ENCODE measurements at regions of chr21 and their contacts with region 1.

Region 1: DNA sequence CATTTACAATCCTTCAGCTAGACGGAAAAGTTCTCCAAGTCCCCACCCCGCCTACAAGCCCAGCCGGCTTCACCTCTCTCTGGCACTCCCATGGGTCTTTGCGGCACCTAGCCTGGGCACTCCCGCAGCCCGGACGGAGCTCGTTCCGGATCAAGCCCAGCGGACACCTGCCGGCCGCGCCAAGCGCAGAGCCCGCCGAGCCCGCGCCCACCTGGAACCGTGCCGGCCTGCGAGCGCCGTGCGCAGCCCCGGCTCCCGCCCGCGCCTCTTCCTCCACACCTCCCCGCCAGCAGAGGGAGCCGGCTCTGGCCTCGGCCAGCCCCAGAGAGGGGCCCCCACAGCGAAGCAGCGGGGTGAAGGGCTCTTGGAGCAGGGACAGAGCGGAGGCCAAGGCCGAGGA is 50.0 kb upstream of the KRTAP19-8 start:
- DNase-seq: no peak
- H3K4me3 Mint-ChIP-seq: no peak overlapping the region
- H3K27ac Mint-ChIP-seq: no peak overlapping the region
- H3K4me1 Mint-ChIP-seq: no peaks in the 10 kb centered on the region
- H3K27me3 Mint-ChIP-seq: peaks cover 35% of the 10 kb centered on the region
- CTCF ChIP-seq: no peak

Region 2: DNA sequence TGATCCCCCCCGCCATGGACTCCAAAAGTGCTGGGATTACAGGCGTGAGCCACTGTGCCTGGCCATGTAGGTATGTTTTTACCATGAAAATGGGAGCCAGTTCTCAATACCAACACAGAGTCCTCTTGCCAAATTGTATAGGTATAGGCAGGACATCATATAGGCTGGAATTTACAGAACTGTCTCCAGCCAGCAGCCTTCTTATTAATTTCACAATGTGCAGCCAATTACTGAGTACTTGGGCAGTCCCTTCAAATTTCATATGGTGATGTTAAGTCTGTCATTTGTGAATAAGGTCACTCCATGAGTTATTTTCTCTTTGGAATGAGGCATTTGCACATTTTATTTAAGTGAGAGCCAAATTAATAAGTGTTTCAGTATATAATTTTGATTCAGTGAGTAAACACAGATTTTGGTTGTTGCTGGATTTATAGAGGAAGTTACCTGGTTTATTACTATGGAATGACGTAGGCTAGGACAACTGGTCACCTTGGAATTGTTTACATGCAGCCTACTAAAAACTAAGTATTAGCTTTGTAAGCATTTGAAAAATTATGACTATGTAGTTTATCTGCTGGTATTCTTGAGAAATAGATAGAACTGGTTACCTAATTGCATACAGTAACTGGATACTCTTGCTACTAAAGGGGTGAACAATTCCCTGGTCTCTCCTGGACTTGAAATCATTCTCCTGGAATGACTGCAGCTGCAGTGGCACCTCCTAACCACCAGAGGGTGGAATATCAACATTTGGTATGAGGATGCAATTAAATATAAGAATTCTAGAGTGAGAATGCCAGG is 747.7 kb before region 1 on chr21:
- CTCF ChIA-PET with region 1: interaction called, 47 read pairs
- POLR2A ChIA-PET with region 1: no interaction called
- intact Hi-C with region 1: loop called (anchors 1 kb)
- DNase-seq: peak; percentile 56
- H3K4me3 Mint-ChIP-seq: no peak overlapping the region
- H3K27ac Mint-ChIP-seq: no peak overlapping the region
- H3K4me1 Mint-ChIP-seq: peaks cover 25% of the 10 kb centered on the region
- H3K27me3 Mint-ChIP-seq: no peaks in the 10 kb centered on the region
- CTCF ChIP-seq: peak; percentile 86

Region 3: DNA sequence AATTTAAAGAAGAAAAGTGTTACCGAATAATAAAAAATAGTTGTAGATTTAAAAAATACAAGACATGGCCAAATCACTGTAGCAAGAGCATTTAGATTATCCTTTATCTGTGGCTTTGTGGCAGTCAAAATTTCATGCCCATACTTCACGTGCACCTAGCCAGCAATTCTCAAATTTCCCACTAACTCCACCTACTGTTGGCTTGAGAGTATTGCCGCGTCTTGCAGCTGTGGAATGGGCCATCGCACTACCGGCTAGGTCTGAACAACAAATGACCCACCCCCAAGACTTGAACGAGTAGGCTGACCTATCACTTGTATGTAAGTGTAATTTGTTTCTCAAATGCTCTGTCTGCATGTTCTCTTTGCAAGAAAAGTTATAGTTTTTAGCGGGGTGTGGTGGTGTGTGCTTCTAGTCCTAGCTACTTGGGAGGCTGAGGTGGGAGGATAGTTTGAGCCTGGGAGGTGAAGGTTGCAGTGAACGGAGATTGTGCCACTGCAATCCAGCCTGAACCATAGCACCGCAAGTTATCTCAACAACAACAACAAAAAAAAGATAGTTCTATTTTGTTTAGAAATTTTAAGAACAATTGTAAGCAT is 654.2 kb before region 1 on chr21:
- CTCF ChIA-PET with region 1: no interaction called
- POLR2A ChIA-PET with region 1: no interaction called
- intact Hi-C with region 1: loop called (anchors 5 kb)
- DNase-seq: peak; percentile 67
- H3K4me3 Mint-ChIP-seq: no peak overlapping the region
- H3K27ac Mint-ChIP-seq: no peak overlapping the region
- H3K4me1 Mint-ChIP-seq: peaks cover 6% of the 10 kb centered on the region
- H3K27me3 Mint-ChIP-seq: peaks cover 89% of the 10 kb centered on the region
- CTCF ChIP-seq: peak; percentile 44

Region 4: GRCh38 chr21:30502041-30502440 is 586.3 kb before region 1 on chr21 and contains the start of gene KRTAP19-5:
- CTCF ChIA-PET with region 1: no interaction called
- POLR2A ChIA-PET with region 1: no interaction called
- intact Hi-C with region 1: loop called (anchors 5 kb)
- DNase-seq: no peak
- H3K4me3 Mint-ChIP-seq: no peak within 1 kb of the TSS
- H3K27ac Mint-ChIP-seq: no peak within 1 kb of the TSS
- H3K4me1 Mint-ChIP-seq: no peaks in the 10 kb centered on the region
- H3K27me3 Mint-ChIP-seq: peaks cover 44% of the 10 kb centered on the region
- CTCF ChIP-seq: no peak
- total RNA-seq, gene KRTAP19-5: not detected in 2 replicates

Region 5: DNA sequence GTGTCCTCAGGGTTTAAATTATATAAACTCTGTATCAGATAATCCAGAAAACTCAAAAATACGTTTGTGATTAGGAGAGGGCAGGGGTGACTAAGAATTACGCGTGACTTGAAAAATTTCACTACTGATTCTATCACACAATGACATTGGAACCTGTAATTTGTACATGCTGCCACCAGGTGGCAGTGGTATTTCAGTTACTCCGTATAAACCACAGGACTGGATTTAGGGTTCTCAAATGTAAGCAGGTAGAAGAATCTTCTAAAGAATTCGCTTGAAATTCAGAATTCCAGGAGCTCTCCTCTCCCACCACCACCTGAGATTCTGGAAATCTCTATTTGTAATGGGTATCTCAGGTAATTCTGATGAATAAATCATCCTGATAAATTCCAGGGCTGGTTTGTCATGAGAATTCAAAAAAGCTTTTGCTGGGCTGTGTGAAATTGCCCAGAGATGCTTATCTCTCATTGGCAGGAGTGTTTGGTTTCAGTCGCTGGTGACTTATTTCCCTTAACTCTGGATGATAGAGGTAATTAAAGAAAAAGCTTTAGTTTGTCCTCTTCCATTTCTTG is 257.0 kb before region 1 on chr21:
- CTCF ChIA-PET with region 1: interaction called, 35 read pairs
- POLR2A ChIA-PET with region 1: no interaction called
- intact Hi-C with region 1: loop called (anchors 1 kb)
- DNase-seq: peak; percentile 50
- H3K4me3 Mint-ChIP-seq: no peak overlapping the region
- H3K27ac Mint-ChIP-seq: no peak overlapping the region
- H3K4me1 Mint-ChIP-seq: no peaks in the 10 kb centered on the region
- H3K27me3 Mint-ChIP-seq: peaks cover 8% of the 10 kb centered on the region
- CTCF ChIP-seq: peak; percentile 72

Region 6: GRCh38 chr21:30839304-30839703 is 249.0 kb before region 1 on chr21:
- CTCF ChIA-PET with region 1: interaction called, 14 read pairs
- POLR2A ChIA-PET with region 1: no interaction called
- intact Hi-C with region 1: loop called (anchors 1 kb)
- DNase-seq: peak; percentile 58
- H3K4me3 Mint-ChIP-seq: no peak overlapping the region
- H3K27ac Mint-ChIP-seq: no peak overlapping the region
- H3K4me1 Mint-ChIP-seq: no peaks in the 10 kb centered on the region
- H3K27me3 Mint-ChIP-seq: peaks cover 27% of the 10 kb centered on the region
- CTCF ChIP-seq: peak; percentile 58

Region 7: GRCh38 chr21:30964283-30964682 is 124.0 kb before region 1 on chr21:
- CTCF ChIA-PET with region 1: no interaction called
- POLR2A ChIA-PET with region 1: no interaction called
- intact Hi-C with region 1: no loop called
- DNase-seq: no peak
- H3K4me3 Mint-ChIP-seq: no peak overlapping the region
- H3K27ac Mint-ChIP-seq: no peak overlapping the region
- H3K4me1 Mint-ChIP-seq: peaks cover 5% of the 10 kb centered on the region
- H3K27me3 Mint-ChIP-seq: no peaks in the 10 kb centered on the region
- CTCF ChIP-seq: no peak